Panc1 (cell line): ENCODE measurements at regions of chr13 and their contacts with region 1.

Region 1: GRCh38 chr13:82305601-82306000 is 1576.7 kb downstream of the SLITRK1 start:
- DNase-seq: no peak
- ATAC-seq: no peak
- H3K4me3 ChIP-seq: no peak overlapping the region
- H3K27ac ChIP-seq: no peak overlapping the region
- H3K4me1 ChIP-seq: no peaks in the 10 kb centered on the region
- H3K27me3 ChIP-seq: no peaks in the 10 kb centered on the region
- CTCF ChIP-seq: no peak

Region 2: DNA sequence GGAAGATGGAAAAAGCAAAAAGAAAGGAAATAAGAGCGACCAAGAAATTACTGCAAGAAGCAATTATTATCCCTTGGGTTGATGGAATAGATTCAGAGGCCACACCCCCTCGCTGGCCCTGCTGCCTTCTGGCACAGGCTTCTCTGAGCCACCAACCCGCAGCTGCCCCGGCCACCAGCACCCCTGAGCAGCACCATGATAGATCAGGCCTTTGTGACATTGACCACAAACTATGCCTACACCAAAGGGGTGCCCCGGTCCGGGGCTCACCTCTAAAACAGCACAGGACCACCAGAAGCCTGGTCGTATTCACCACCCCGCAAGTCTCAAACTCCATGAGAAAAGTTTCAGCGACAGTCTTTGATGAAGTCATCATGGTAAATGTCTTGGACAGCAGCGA is 517.3 kb after region 1 on chr13:
- CTCF ChIA-PET with region 1: no interaction called
- POLR2A ChIA-PET with region 1: interaction called, 13 read pairs
- in situ Hi-C with region 1: no loop called
- intact Hi-C with region 1: no loop called
- DNase-seq: no peak
- ATAC-seq: no peak
- H3K4me3 ChIP-seq: no peak overlapping the region
- H3K27ac ChIP-seq: no peak overlapping the region
- H3K4me1 ChIP-seq: no peaks in the 10 kb centered on the region
- H3K27me3 ChIP-seq: no peaks in the 10 kb centered on the region
- CTCF ChIP-seq: no peak